H1 (cell line): ENCODE measurements at regions of chr5 and their contacts with region 1.

Region 1: GRCh38 chr5:72523960-72524582 is 16.9 kb upstream of the ZNF366 start:
- DNase-seq: no peak
- H3K4me3 ChIP-seq: no peak overlapping the region
- H3K27ac ChIP-seq: no peak overlapping the region
- H3K4me1 ChIP-seq: no peaks in the 10 kb centered on the region
- H3K27me3 ChIP-seq: no peaks in the 10 kb centered on the region
- CTCF ChIP-seq: peak in 2 of 3 experiments; percentile 61 to 64; a peak in 3 of 4 replicates
- EP300 ChIP-seq: no peak
- POLR2A ChIP-seq: no peak
- RAD21 ChIP-seq: peak; percentile 90

Region 2: GRCh38 chr5:72366324-72366976 is 157.6 kb before region 1 on chr5:
- CTCF ChIA-PET with region 1: interaction called, 34 read pairs
- POLR2A ChIA-PET with region 1: no interaction called
- DNase-seq: no peak
- H3K4me3 ChIP-seq: no peak overlapping the region
- H3K27ac ChIP-seq: no peak overlapping the region
- H3K4me1 ChIP-seq: peaks cover 0 to 6% (median 4%) of the 10 kb centered on the region in 4 experiments; a peak in 4 of 7 replicates
- H3K27me3 ChIP-seq: no peaks in the 10 kb centered on the region
- CTCF ChIP-seq: peak in 2 of 3 experiments; percentile 46 to 61; a peak in 2 of 4 replicates
- EP300 ChIP-seq: no peak
- POLR2A ChIP-seq: no peak
- RAD21 ChIP-seq: peak; percentile 70 to 77

Region 3: DNA sequence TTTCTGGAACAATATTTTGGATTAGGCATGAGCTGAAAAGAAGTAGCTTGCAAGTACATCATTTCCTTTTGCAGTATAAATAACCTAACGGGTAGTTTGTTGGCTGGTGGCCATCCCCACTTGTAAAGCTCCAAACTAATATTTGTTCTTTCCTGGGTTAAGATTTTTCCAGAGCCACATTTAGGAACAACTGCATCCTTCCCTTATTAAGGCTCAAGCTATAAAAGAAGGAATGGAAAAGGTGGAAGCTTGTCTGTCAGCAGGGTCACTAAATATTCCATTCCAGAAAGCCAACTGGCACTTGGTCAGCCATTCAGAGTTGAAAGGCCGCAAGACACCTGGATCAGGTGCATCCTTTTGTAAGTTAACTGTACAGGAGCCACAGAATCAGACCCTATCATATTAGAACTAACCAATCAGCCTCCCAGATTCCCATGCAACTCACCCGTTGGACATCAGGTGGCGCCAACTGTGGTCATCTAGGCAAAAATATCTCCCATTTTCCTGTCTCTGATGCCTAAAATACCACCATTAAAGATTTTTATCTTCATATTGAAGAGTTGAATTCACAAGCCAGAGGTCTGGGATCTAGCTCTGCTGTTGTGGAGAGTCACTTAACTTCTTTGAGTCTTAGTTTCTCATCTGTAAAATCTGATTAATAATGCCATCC is 121.0 kb before region 1 on chr5:
- CTCF ChIA-PET with region 1: interaction called, 37 read pairs
- POLR2A ChIA-PET with region 1: no interaction called
- DNase-seq: peak in 1 of 2 experiments; percentile 62
- H3K4me3 ChIP-seq: no peak overlapping the region
- H3K27ac ChIP-seq: no peak overlapping the region
- H3K4me1 ChIP-seq: 0 out of 7 replicates have a peak, but pooled peaks cover 0 to 2% (median 0%) of the 10 kb centered on the region in 4 experiments
- H3K27me3 ChIP-seq: no peaks in the 10 kb centered on the region
- CTCF ChIP-seq: peak; percentile 53 to 66 (median 62)
- EP300 ChIP-seq: no peak
- POLR2A ChIP-seq: no peak
- RAD21 ChIP-seq: peak; percentile 55 to 64

Region 4: DNA sequence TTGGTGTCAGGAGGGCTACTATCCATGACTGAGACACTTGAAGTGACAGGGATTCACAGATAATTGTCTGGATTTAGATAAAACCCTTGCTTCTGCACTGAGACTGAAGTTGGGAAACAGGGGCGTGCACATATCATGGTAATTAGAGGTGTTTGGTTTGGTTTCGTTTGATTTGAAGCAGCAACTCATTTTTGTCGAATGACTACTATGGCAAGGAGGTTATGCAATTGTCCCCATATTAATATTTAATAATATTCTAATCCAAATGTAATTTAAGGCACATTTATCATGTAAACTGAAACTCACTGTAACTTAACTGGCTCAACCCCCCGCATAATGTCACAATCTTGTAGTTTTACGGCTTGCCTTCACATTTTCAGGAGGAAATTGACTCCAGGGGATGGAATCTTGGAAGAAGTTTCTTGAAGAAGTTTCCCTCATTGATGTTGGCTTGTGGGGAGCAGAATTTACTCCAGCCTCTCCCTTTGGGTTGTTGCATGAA is 29.4 kb before region 1 on chr5:
- CTCF ChIA-PET with region 1: no interaction called
- POLR2A ChIA-PET with region 1: no interaction called
- DNase-seq: no peak
- H3K4me3 ChIP-seq: no peak overlapping the region
- H3K27ac ChIP-seq: no peak overlapping the region
- H3K4me1 ChIP-seq: no peaks in the 10 kb centered on the region; a peak in 1 of 7 replicates
- H3K27me3 ChIP-seq: no peaks in the 10 kb centered on the region
- CTCF ChIP-seq: no peak
- EP300 ChIP-seq: no peak
- POLR2A ChIP-seq: no peak
- RAD21 ChIP-seq: no peak

Region 5: DNA sequence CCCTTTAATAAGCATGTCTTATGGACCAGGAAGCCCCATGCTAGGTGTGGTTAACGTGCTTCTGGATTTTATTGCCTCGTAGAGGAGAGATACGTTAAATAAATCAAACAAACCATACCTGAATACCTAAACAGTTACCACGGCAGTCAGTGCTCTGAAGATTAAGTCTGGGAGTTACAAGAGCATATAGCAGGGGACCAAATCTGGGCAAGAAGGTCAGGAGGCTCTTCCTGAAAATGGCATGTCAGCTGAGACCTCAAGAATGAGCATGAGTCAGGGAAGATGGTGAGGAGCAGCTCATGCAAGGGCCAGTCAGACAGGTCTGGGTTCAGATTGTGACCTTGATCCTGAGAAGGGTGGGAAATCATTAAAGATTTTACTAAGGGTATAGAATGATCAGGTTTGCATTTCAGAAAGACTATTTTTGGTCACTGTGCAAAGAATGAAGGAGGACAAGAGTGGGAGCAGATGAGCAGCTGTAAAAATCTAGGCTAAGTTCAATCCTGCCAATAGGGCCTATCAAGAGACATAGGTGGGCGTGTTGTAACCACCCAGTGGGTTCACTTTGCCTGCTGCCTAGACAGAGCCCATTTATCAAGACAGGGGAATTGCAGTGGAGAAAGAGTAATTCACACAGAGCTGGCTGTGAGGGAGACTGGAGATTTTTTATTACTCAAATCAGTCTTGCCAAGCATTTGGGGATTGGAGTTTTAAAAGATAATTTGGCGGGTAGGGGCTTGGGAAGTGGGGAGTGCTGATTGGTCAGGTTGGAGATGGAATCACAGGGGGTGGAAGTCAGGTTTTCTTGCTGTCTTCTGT is 12.1 kb before region 1 on chr5:
- CTCF ChIA-PET with region 1: interaction called, 23 read pairs
- POLR2A ChIA-PET with region 1: no interaction called
- DNase-seq: no peak
- H3K4me3 ChIP-seq: no peak overlapping the region
- H3K27ac ChIP-seq: no peak overlapping the region
- H3K4me1 ChIP-seq: peaks cover 0 to 8% (median 0%) of the 10 kb centered on the region in 4 experiments; a peak in 1 of 7 replicates
- H3K27me3 ChIP-seq: no peaks in the 10 kb centered on the region
- CTCF ChIP-seq: no peak
- EP300 ChIP-seq: no peak
- POLR2A ChIP-seq: no peak
- RAD21 ChIP-seq: no peak